ENCODE measurements at regions of chr1 and their contacts with region 1.

Region 1: GRCh38 chr1:39105061-39105840 is 79.1 kb downstream of the NDUFS5 start:
- DNase-seq: peak; percentile 81 to 88
- ATAC-seq: peak; percentile 82 to 88 (median 86)
- H3K4me3 ChIP-seq: peak overlapping the region; percentile 80
- H3K27ac ChIP-seq: peak overlapping the region; percentile 92
- H3K4me1 ChIP-seq: peaks cover 48% of the 10 kb centered on the region
- H3K27me3 ChIP-seq: no peaks in the 10 kb centered on the region
- CTCF ChIP-seq: no peak

Region 2: DNA sequence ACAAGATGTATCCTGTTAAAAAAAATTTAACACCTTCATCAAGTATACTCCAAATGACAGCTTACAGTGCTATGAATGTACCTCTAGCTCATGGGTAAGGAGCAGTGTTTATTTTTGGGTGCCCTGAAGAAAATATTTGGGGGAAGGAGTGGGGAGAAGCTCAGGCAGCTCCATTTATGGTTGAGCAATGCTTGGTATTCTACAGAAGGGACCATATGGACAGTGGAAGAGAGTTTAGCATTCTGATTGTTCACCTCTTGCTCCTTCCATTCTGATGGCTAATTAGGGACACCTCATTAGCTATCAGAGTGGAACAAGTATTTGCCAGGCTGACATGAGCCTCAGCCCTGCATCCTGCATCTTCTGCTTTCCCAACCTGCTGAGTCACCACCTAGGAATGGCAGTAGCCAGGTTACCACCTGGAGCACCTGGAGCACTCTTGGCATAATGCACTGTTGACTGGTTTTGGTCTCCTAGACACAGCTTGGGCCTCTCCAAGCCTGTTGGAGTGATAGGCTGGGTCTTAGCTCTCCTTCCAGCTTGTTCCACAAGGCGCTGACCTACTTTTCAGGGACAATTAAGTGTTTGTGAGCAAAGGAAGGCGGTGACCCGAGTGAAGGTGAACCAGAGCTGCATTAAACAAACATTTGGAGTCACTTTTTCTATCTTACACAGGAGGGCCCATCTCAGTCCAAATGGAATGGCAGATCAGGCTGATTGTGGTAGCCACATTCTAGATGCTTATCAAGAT is 37.3 kb after region 1 on chr1:
- intact Hi-C with region 1: loop called in 1 of 2 experiments (anchors 5 kb)
- DNase-seq: no peak
- ATAC-seq: peak in 3 of 4 donors; percentile 34 to 53 (median 35)
- H3K4me3 ChIP-seq: no peak overlapping the region
- H3K27ac ChIP-seq: no peak overlapping the region
- H3K4me1 ChIP-seq: peaks cover 37% of the 10 kb centered on the region
- H3K27me3 ChIP-seq: no peaks in the 10 kb centered on the region
- CTCF ChIP-seq: no peak

Region 3: GRCh38 chr1:39183503-39184353 is 78.5 kb after region 1 on chr1:
- intact Hi-C with region 1: loop called (anchors 2 to 5 kb)
- DNase-seq: peak; percentile 67 to 81
- ATAC-seq: peak; percentile 93 to 97 (median 94)
- H3K4me3 ChIP-seq: no peak overlapping the region
- H3K27ac ChIP-seq: peak overlapping the region; percentile 84
- H3K4me1 ChIP-seq: peaks cover 43% of the 10 kb centered on the region
- H3K27me3 ChIP-seq: no peaks in the 10 kb centered on the region
- CTCF ChIP-seq: peak; percentile 57

Region 4: GRCh38 chr1:39189592-39190041 is 84.4 kb after region 1 on chr1:
- intact Hi-C with region 1: loop called (anchors 1 to 5 kb)
- DNase-seq: no peak
- ATAC-seq: no peak
- H3K4me3 ChIP-seq: no peak overlapping the region
- H3K27ac ChIP-seq: peak overlapping the region; percentile 19
- H3K4me1 ChIP-seq: peaks cover 48% of the 10 kb centered on the region
- H3K27me3 ChIP-seq: no peaks in the 10 kb centered on the region
- CTCF ChIP-seq: no peak

Region 5: GRCh38 chr1:39258146-39258924 is 153.1 kb after region 1 on chr1:
- intact Hi-C with region 1: loop called (anchors 2 kb)
- DNase-seq: peak; percentile 62 to 75
- ATAC-seq: peak; percentile 88 to 92 (median 90)
- H3K4me3 ChIP-seq: no peak overlapping the region
- H3K27ac ChIP-seq: peak overlapping the region; percentile 0
- H3K4me1 ChIP-seq: peaks cover 13% of the 10 kb centered on the region
- H3K27me3 ChIP-seq: no peaks in the 10 kb centered on the region
- CTCF ChIP-seq: peak; percentile 85

Measured in psoas muscle (tissue), 8 donors.